Gastrocnemius medialis (tissue), 4 donors: ENCODE measurements at regions of chr11 and their contacts with region 1.

Region 1: DNA sequence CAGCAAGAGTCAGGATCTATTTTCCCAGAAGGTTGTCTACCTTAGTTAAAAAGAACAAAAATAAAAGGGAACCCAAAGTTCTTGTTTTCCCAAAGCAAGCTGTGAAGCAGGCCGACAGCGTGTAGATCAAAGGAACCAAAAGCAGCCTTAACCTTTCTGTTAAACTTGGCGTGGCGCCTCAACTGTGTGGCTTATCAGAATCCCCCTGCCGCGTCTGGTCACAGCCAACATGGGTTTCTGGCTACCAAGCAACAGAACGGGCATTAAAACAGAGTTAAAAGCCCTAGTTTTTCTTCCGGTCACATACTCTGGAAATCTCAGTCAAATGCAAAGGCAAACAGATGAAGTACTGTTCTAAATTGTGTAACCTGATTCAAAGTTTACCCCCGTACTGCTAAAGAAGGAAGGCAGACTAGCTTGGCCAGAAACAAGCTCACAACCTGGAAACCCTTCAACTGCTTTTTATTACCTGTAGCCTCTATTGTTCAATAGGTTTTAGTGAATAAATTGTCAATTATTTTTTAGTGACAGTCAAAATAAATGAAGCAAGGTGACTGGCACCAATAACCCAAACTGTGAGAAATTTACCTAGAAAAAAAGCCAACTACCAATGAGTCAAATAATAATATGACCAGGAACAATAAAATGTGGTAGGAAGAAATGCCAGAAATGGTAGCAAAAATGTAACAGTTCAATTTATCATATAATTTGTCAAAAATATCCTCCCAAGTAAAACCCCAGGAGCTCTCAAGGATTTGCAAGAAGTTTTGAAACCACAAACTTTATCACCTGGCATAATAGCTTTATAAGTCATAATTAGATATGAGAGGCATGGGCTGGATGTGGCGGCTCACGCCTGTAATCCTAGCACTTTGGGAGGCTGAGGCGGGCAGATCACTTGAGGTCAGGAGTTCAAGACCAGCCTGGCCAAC is 21.4 kb downstream of the CHKA start:
- DNase-seq: no peak
- ATAC-seq: no peak
- H3K4me3 ChIP-seq: peak overlapping the region; percentile 4 to 31 (median 17)
- H3K27ac ChIP-seq: peak overlapping the region; percentile 27 to 49 (median 42)
- H3K4me1 ChIP-seq: peaks cover 18 to 21% of the 10 kb centered on the region in 2 donors
- H3K27me3 ChIP-seq: no peaks in the 10 kb centered on the region
- CTCF ChIP-seq: no peak
- POLR2A ChIP-seq: no peak

Region 2: GRCh38 chr11:68137822-68138221 is 38.1 kb after region 1 on chr11:
- in situ Hi-C with region 1: loop called in 1 of 4 experiments (anchors 5 kb)
- intact Hi-C with region 1: no loop called
- DNase-seq: no peak
- ATAC-seq: no peak
- H3K4me3 ChIP-seq: no peak overlapping the region
- H3K27ac ChIP-seq: no peak overlapping the region
- H3K4me1 ChIP-seq: no peaks in the 10 kb centered on the region
- H3K27me3 ChIP-seq: no peaks in the 10 kb centered on the region
- CTCF ChIP-seq: no peak
- POLR2A ChIP-seq: no peak